Dorsolateral prefrontal cortex (tissue), 120 donors: ENCODE measurements at regions of chr2 and their contacts with region 1.

Region 1: DNA sequence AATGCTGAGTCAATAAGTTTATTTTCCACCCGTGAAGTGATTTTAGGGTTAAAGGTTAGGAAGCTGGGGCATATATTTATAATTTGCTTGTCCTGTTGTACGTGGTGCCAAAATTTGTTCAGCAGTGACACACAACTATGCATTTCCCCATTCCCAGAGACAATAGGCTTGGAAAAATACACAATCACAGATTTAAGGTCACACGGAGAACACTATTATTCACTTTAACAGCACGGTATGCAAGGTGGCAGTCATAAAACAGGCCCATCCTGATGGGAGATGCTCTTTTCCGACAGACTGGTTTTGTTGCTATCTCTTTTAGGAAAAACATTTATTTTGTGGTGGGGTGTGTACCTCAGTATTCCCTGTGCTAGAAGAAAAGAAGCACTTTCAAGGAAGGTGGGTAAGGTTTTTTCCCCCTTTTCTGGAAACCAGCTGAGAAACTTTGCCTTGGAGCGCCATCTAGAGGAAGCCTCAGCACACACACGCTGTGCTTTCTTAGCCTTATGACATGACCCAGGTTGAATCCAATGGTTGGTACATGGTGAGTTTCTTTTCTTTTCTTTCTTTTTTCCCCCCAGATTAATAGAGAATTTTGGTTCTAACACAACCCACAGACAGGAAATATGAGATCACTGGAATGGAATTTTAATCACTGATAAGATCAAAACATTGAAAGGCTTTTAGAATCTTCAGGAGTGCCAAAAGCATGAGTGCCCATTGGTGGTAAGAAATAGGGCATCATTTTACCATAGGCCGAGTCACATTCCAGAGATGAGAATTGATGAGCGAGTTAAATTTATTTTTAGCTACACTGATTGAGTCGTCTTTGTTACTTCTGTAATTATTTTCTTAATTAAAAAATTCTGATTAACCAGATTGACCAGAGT is 332.1 kb downstream of the AGPS start:
- DNase-seq: peak in 9 of 10 donors; percentile 45 to 71 (median 55)
- H3K4me3 ChIP-seq: peak overlapping the region in 11 of 59 donors; percentile 4 to 35 (median 13)
- H3K27ac ChIP-seq: peak overlapping the region in 1 of 59 donors; percentile 25
- H3K27me3 ChIP-seq: no peaks in the 10 kb centered on the region
- CTCF ChIP-seq: peak; percentile 53 to 96 (median 88)

Region 2: GRCh38 chr2:177489719-177490301 is 234.8 kb before region 1 on chr2:
- intact Hi-C with region 1: loop called in 1 of 2 experiments (anchors 5 kb)
- DNase-seq: no peak
- H3K4me3 ChIP-seq: no peak overlapping the region
- H3K27ac ChIP-seq: no peak overlapping the region
- H3K27me3 ChIP-seq: no peaks in the 10 kb centered on the region
- CTCF ChIP-seq: peak; percentile 40 to 80 (median 62)

Region 3: DNA sequence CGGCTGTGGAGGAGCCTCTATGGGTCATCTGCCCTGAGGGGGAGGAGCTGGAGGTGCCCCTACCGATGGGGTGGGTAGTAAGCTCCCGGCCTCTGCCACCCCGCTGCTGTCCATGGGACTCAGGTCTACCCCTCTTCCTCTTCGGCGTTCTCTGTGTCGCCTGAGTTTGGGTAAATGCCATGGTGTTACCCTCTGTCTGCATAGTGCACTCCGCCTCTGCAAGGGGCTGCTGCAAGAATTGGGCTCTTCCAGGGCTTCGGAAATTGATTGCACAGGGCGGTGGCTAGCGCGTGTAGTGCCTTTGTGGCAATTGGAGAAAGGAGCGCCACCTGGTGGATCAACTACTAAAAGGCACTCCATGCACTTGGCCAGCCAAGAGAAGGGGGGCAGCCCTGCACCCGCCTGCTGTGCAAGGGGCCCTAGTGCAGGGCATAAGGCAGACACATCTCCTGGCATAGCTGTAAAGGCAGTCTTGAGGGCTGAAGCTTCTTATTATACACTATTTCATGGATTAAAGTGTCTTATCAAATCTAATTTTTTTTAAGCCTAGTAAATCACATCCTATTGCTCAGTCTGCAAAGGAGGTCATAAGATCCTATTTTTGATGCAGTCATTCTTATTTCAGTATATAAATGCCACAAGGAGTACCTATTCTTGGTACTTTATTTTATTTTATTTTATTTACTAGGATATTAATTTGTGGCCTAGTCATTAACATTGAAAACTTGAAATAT is 39.1 kb after region 1 on chr2:
- intact Hi-C with region 1: loop called in 1 of 2 experiments (anchors 5 kb)
- DNase-seq: peak in 9 of 10 donors; percentile 32 to 73 (median 55)
- H3K4me3 ChIP-seq: peak overlapping the region in 12 of 59 donors; percentile 16 to 42 (median 24)
- H3K27ac ChIP-seq: no peak overlapping the region
- H3K27me3 ChIP-seq: peaks cover 0 to 6% (median 0%) of the 10 kb centered on the region in 45 donors
- CTCF ChIP-seq: peak; percentile 56 to 88 (median 79)